Ascending aorta (tissue), 2 donors: ENCODE measurements at regions of chr15 and their contacts with region 1.

Region 1: DNA sequence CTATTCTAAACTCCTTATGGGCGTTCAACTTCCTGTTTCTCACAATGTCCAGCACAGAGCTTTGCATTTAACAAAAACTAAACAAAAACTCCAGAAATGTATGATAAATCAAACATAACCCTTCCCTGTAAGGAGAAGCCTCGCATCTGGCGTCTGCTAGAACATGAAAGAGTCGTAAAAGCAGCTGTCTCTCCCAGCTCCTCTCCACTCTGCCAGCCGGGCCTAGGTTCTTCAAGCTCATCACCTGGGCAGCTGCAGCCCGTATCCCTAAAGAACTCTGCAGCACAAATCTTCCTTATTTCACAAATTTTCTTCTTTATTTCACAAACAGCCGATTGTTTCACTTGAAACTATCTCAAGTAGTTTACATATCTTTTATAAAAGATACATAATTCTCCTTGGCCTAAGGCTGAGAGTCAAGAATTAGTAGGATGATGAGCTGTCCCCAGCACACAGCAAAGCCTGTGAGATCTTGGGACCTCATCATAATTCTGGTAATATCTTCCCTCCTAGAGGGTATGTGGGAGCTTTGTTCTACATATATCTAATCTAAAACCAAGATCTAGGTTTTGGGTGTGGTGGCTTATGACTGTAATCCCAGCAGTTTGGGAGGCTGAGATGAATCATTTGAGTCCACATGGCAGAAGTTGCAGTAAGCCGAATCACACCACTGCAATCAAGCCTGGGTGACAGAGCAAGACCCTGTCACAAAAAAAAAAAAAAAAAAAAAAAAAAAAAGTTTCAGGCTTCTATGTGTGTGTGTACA is 35.3 kb downstream of the ANXA2 start:
- DNase-seq: peak in 1 of 2 donors; percentile 73
- H3K4me3 ChIP-seq: peak overlapping the region; percentile 2 to 11
- H3K27ac ChIP-seq: peak overlapping the region; percentile 72 to 82
- H3K4me1 ChIP-seq: peaks cover 11 to 53% of the 10 kb centered on the region in 2 donors
- H3K27me3 ChIP-seq: no peaks in the 10 kb centered on the region
- CTCF ChIP-seq: no peak

Region 2: DNA sequence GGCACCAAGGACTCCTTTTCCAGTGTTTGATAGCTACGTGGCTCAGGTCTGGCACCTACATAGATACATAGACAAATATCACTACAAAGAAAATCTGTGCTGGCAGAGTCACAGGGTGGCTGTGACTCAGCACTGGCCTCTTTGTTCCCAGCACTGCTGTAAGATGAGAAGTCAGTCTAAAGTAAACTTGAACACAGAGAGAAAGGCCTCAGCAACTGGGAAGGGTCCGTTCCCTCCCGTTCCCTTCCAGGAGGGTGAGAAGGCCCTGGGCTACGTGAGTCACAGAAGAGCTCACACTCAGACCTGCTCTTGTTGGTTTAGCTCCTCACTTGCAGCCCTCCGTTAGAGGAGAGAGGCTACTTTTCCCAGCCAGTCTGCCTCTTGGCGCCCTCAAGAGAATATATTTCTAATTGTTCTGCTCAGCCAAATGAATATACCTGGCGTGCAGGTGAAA is 12.2 kb after region 1 on chr15:
- intact Hi-C with region 1: loop called (anchors 1 kb)
- DNase-seq: peak; percentile 57 to 93
- H3K4me3 ChIP-seq: peak overlapping the region in 1 of 2 donors; percentile 40
- H3K27ac ChIP-seq: peak overlapping the region; percentile 90 to 96
- H3K4me1 ChIP-seq: peaks cover 46 to 85% of the 10 kb centered on the region in 2 donors
- H3K27me3 ChIP-seq: no peaks in the 10 kb centered on the region
- CTCF ChIP-seq: no peak

Region 3: DNA sequence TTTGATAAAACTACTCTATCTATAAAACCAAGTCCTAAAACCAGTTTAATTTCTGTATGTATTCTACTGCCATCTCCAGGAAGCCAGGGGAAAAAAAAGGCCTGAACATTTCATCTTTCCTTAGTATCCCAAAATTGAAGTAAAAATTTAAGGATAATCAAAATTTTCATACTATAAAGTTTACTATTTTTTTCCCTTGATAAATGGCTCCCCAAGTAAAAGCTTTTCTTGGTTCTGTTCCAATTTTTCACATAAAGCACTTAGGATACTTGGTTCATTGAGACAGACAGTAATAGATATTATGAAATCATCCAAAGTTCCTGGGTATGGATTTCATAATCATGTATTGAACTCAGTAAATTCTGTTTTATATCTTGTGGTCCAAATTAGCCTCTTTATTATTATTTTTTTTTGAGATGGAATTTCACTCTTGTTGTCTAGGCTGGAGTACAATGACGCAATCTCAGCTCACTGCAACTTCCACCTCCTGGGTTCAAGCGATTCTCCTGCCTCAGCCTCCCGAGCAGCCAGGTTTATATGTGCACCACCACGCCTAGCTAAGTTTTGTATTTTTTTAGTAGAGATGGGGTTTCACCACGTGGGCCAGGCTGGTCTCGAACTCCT is 81.9 kb after region 1 on chr15:
- intact Hi-C with region 1: loop called (anchors 1 kb)
- DNase-seq: no peak
- H3K4me3 ChIP-seq: no peak overlapping the region
- H3K27ac ChIP-seq: no peak overlapping the region
- H3K4me1 ChIP-seq: no peaks in the 10 kb centered on the region
- H3K27me3 ChIP-seq: no peaks in the 10 kb centered on the region
- CTCF ChIP-seq: peak; percentile 26 to 79 (median 60)

Region 4: DNA sequence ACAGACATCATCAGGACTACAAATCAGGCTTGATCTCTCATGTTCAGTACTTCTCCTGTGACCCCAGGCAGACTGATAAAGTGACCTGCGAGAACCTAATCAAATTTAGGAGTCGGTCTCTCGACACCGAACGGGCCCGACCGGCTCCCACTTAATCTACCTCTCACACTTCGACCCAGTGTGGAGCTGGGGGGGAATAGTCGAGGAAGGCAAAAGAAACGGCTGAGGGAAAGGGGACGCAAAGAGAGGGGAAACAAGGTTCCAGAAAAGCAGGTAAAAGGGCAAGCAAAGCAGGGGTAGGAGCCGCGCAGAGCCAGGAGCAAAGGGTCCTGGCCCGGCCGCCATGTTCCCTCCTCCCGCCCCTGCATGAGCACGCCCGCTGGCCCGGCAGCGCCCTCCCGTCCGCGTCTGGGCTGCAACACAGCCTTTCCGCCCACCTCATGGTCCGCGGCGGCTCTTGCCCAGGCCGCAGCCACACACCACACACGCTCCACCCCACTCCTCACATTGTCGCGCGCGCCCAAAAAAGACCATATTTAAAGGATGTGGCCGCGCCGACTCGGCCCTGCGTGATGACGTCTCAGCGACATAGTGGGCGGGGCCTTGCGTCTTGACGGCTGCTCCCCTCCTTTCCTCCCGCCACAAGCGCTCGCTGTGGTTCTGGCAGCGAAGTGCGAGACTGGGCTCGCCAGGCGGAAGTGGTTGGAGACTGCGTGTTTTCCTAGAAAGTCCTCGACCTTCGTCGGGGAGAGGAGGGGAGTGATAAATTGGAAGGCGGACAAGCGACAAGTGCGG is 116.3 kb after region 1 on chr15 and contains the start of gene ICE2:
- intact Hi-C with region 1: loop called (anchors 5 kb)
- DNase-seq: peak; percentile 85 to 98
- H3K4me3 ChIP-seq: peak within 1 kb of the TSS; percentile 84 to 100
- H3K27ac ChIP-seq: peak within 1 kb of the TSS; percentile 95 to 98
- H3K4me1 ChIP-seq: peaks cover 0 to 22% of the 10 kb centered on the region in 2 donors
- H3K27me3 ChIP-seq: no peaks in the 10 kb centered on the region
- CTCF ChIP-seq: no peak
- total RNA-seq, gene ICE2: 45.1 TPM